GM12878 (cell line): ENCODE measurements at regions of chr1 and their contacts with region 1.

Region 1: DNA sequence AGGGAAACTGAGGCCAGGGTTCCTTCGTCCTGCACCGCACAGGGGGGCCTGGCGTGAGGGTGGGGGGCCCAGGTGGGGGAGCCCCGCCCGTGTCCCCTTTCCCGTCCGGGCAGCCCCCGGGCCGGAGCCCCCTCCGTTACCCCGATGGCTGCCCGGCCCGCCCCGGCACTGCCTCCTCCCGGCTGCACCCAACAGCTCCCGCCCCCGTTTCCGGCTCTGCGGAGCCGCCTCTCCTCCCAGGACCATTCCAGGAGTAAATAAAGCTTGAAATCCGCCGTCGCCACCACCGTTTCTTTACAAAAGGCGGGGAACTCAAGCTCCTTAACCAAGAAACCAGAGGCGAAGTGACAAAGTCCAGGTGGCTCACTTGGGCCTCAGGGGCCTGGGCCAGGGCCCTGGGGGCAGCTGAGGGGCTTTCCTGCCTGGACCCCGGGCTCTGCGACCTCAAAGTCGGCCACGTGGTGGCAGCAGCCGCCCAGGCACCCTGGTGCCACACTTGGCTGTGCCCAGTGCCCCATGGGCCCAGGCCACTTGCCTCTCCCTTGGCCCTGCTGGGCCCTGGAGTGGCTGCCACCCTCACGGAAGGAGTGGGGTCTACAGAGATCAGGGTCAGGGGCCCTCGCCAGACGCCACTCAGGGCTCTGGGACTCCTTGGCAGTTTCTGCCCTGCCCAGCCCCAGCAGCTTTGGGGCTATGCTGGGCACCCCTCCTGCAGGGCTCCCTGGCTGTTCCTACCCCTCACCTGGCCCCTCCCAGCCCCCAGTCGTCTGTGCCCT is 514 bp upstream of the FAAP20 start:
- DNase-seq: peak; percentile 43
- ATAC-seq: peak; percentile 91
- H3K4me3 ChIP-seq: peak overlapping the region; percentile 61
- H3K27ac ChIP-seq: peak overlapping the region; percentile 89
- H3K4me1 ChIP-seq: peaks cover 10% of the 10 kb centered on the region
- H3K27me3 ChIP-seq: no peaks in the 10 kb centered on the region
- CTCF ChIP-seq: peak; percentile 90 to 92 (median 91); a peak in 5 of 6 replicates
- EP300 ChIP-seq: no peak
- POLR2A ChIP-seq: peak; percentile 54
- RAD21 ChIP-seq: peak; percentile 89

Region 2: GRCh38 chr1:2205191-2205952 is 10.3 kb after region 1 on chr1:
- CTCF ChIA-PET with region 1: interaction called, 3 read pairs
- POLR2A ChIA-PET with region 1: interaction called, 9 read pairs
- RAD21 ChIA-PET with region 1: interaction called, 14 read pairs
- SMC1A ChIA-PET with region 1: no interaction called
- in situ Hi-C with region 1: no loop called
- intact Hi-C with region 1: no loop called
- DNase-seq: peak; percentile 33
- ATAC-seq: peak; percentile 90
- H3K4me3 ChIP-seq: peak overlapping the region; percentile 64; the same call in 1 of the 2 replicates
- H3K27ac ChIP-seq: no peak overlapping the region
- H3K4me1 ChIP-seq: peaks cover 4% of the 10 kb centered on the region
- H3K27me3 ChIP-seq: no peaks in the 10 kb centered on the region; a peak in 1 of 4 replicates
- CTCF ChIP-seq: no peak
- EP300 ChIP-seq: no peak
- POLR2A ChIP-seq: peak; percentile 51
- RAD21 ChIP-seq: no peak

Region 3: DNA sequence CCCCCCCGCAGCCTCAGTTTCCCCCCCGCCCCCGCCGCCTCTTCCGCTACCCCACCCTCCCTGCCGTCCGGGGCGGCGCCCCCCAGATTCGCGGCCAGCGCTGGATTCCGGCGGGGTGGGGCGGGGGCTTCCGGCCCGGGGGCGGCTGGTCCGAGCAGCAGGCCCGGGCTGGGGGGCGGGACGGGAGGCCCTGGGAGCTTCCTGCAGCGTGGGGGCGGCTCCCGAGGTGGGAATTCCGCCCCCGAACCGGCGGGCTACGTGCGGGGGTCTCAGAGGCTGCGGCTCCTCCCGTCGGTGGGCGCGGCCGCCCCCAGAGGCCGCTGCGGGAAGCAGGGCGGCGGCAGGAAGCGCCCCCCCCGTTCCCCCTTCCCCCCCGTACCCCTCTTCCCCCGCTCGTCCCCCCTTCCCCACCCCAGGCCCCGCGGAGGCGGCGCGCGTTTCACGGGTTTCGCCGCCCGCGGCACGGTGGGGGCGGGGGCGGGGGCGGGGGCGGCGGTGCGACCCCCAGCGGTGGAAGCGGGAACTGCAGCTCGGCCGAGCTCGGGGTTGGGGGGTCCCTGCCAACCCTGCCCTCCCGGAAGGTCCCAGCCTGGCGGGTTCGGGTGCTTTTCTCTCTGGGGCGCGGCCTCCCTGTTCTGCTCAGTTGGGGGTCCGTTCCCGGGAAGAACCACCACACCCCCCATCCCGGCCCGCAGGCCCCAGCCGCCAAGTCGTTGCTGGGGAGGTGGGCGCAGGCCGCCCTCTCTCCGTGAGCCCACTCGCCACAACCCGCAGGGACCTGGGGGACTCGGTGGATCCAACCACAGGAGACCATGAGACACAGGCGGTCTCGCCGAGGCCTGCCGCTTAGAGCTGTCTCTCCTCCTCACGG is 120.0 kb after region 1 on chr1:
- CTCF ChIA-PET with region 1: interaction called, 12 read pairs
- POLR2A ChIA-PET with region 1: no interaction called
- RAD21 ChIA-PET with region 1: interaction called, 18 read pairs
- SMC1A ChIA-PET with region 1: interaction called, 3 read pairs
- in situ Hi-C with region 1: no loop called
- intact Hi-C with region 1: loop called (anchors 5 kb)
- DNase-seq: no peak
- ATAC-seq: peak; percentile 68
- H3K4me3 ChIP-seq: peak overlapping the region; percentile 41; the same call in 1 of the 2 replicates
- H3K27ac ChIP-seq: no peak overlapping the region
- H3K4me1 ChIP-seq: peaks cover 10% of the 10 kb centered on the region
- H3K27me3 ChIP-seq: no peaks in the 10 kb centered on the region
- CTCF ChIP-seq: peak; percentile 54 to 71 (median 56)
- EP300 ChIP-seq: no peak
- POLR2A ChIP-seq: no peak
- RAD21 ChIP-seq: 0 out of 2 replicates have a peak, but pooled peaks have one; percentile 6

Region 4: DNA sequence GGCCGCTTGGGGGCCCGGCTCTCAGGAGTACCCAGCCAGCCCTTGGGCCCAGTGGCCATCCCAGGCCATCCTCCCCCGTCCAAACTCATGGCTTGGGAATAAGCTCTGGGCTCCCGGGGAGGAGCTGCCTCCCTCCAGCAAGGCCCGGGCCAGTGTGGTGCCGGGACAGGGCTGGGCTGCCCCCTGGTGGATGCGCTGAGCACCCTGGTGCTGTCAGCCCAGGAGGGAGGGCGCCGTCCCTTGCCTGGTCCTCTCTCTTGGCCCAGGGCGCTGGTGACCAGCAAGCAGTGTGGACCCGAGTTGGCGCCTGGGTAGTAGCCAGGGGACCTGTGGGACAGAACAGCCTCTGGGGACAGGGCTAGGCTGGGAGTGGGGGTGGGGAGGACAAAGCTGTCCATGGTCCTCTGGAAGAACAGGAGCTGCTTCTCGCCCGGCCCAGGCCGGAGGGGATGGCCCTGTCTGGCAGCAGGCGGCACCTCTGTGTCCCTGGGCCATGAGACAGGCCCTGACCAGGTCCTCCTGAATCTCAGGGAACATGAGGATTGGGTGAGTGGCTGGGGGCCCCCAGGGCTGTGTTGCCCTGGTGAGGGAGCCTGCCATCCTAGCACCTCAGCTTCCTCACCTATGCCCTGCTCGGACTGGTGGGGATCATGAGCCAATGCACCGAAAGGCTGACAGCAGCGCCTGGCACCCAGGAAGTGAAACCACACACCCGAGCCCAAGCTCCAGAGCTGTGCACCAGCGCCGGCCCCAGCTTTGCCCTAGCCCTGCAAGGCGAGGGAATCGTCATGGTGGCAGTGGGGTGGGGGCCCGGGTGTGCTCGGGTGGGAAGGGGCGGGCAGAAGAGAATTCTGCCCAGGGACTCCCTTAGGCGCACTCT is 186.9 kb after region 1 on chr1:
- CTCF ChIA-PET with region 1: interaction called, 98 read pairs
- POLR2A ChIA-PET with region 1: interaction called, 12 read pairs
- RAD21 ChIA-PET with region 1: interaction called, 78 read pairs
- SMC1A ChIA-PET with region 1: interaction called, 62 read pairs
- in situ Hi-C with region 1: loop called (anchors 5 kb)
- intact Hi-C with region 1: loop called (anchors 1 kb)
- DNase-seq: no peak
- ATAC-seq: peak; percentile 98
- H3K4me3 ChIP-seq: no peak overlapping the region
- H3K27ac ChIP-seq: no peak overlapping the region
- H3K4me1 ChIP-seq: peaks cover 11% of the 10 kb centered on the region
- H3K27me3 ChIP-seq: no peaks in the 10 kb centered on the region
- CTCF ChIP-seq: peak; percentile 87 to 95 (median 95)
- EP300 ChIP-seq: no peak
- POLR2A ChIP-seq: no peak
- RAD21 ChIP-seq: peak; percentile 84

Region 5: GRCh38 chr1:2391041-2391930 is 196.2 kb after region 1 on chr1 and contains the starts of genes MORN1 and RER1:
- CTCF ChIA-PET with region 1: interaction called, 22 read pairs
- POLR2A ChIA-PET with region 1: interaction called, 5 read pairs
- RAD21 ChIA-PET with region 1: interaction called, 16 read pairs
- SMC1A ChIA-PET with region 1: interaction called, 11 read pairs
- in situ Hi-C with region 1: loop called (anchors 5 kb)
- intact Hi-C with region 1: no loop called
- DNase-seq: peak; percentile 93
- ATAC-seq: peak; percentile 97
- H3K4me3 ChIP-seq: peak within 1 kb of the TSS; percentile 98
- H3K27ac ChIP-seq: peak within 1 kb of the TSS; percentile 71
- H3K4me1 ChIP-seq: peaks cover 42% of the 10 kb centered on the region
- H3K27me3 ChIP-seq: no peaks in the 10 kb centered on the region
- CTCF ChIP-seq: no peak
- EP300 ChIP-seq: no peak
- POLR2A ChIP-seq: peak; percentile 96
- RAD21 ChIP-seq: no peak
- polyA plus RNA-seq, gene MORN1: 0.76 to 1.8 TPM
- polyA plus RNA-seq, gene RER1: 29.2 to 48.5 TPM

Region 6: GRCh38 chr1:2412519-2413233 is 217.6 kb after region 1 on chr1 and contains the start of gene PEX10:
- CTCF ChIA-PET with region 1: interaction called, 7 read pairs
- POLR2A ChIA-PET with region 1: interaction called, 3 read pairs
- RAD21 ChIA-PET with region 1: interaction called, 13 read pairs
- SMC1A ChIA-PET with region 1: interaction called, 9 read pairs
- in situ Hi-C with region 1: no loop called
- intact Hi-C with region 1: no loop called
- DNase-seq: peak; percentile 80
- ATAC-seq: peak; percentile 88
- H3K4me3 ChIP-seq: peak within 1 kb of the TSS; percentile 98
- H3K27ac ChIP-seq: peak within 1 kb of the TSS; percentile 62
- H3K4me1 ChIP-seq: peaks cover 27% of the 10 kb centered on the region
- H3K27me3 ChIP-seq: no peaks in the 10 kb centered on the region
- CTCF ChIP-seq: no peak
- EP300 ChIP-seq: no peak
- POLR2A ChIP-seq: peak; percentile 87
- RAD21 ChIP-seq: no peak
- polyA plus RNA-seq, gene PEX10: 0.24 TPM in 1 of 2 experiments, not detected in the other

Region 7: GRCh38 chr1:2425892-2426291 is 230.8 kb after region 1 on chr1:
- CTCF ChIA-PET with region 1: no interaction called
- POLR2A ChIA-PET with region 1: no interaction called
- RAD21 ChIA-PET with region 1: no interaction called
- SMC1A ChIA-PET with region 1: no interaction called
- in situ Hi-C with region 1: no loop called
- intact Hi-C with region 1: no loop called
- DNase-seq: no peak
- ATAC-seq: no peak
- H3K4me3 ChIP-seq: no peak overlapping the region
- H3K27ac ChIP-seq: no peak overlapping the region
- H3K4me1 ChIP-seq: no peaks in the 10 kb centered on the region
- H3K27me3 ChIP-seq: no peaks in the 10 kb centered on the region
- CTCF ChIP-seq: no peak
- EP300 ChIP-seq: no peak
- POLR2A ChIP-seq: no peak
- RAD21 ChIP-seq: no peak

Region 8: DNA sequence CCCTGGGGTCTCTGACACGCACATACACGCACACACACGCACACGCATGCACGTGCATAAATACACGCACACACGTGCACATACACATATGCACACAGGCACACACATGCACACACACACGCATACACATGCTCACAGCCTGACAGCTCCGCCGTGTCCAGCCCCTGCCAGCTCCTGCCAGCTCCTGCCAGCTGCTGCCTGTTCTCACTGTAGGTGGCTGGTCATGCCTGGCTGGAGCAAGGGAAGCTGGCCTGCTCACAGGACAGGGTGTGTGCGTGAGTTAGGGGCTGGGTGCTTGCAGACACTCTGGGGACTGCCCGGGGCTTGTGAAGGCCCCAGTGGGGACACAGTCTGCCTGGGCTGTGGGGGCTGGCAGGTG is 285.9 kb after region 1 on chr1:
- CTCF ChIA-PET with region 1: no interaction called
- POLR2A ChIA-PET with region 1: no interaction called
- RAD21 ChIA-PET with region 1: no interaction called
- SMC1A ChIA-PET with region 1: no interaction called
- in situ Hi-C with region 1: no loop called
- intact Hi-C with region 1: no loop called
- DNase-seq: no peak
- ATAC-seq: no peak; the same call in 2 of the 3 replicates
- H3K4me3 ChIP-seq: no peak overlapping the region
- H3K27ac ChIP-seq: no peak overlapping the region
- H3K4me1 ChIP-seq: no peaks in the 10 kb centered on the region
- H3K27me3 ChIP-seq: no peaks in the 10 kb centered on the region
- CTCF ChIP-seq: no peak
- EP300 ChIP-seq: no peak
- POLR2A ChIP-seq: no peak
- RAD21 ChIP-seq: no peak

Region 9: DNA sequence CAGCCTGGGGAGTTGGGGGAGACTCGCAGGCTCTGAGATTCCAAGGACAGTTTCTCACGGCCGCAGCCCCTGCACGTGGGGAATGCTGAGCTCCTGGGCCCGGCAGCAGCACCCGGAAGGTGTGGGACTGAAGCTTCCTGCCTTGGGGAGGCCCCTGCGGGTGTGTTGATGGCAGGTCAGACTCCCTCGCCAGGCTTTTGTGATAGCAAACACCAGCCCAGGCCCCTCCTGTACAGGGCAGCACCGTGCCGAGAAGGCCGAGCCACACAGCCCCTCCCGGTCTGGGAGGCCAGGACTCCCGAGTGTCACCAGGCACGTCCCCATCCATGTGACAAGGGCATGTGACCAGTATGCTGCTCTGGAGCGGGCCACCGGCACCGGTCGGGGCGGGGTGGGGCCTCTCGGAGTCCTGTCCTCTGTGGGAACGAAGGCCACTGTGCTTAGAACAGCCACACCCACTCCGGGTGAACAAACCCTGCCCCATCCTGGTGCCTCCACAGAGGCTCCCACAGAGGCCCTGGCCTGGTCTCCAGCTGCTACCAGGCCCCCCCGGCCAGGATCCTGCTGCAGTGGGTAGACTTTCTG is 1228.3 kb after region 1 on chr1:
- CTCF ChIA-PET with region 1: no interaction called
- POLR2A ChIA-PET with region 1: no interaction called
- RAD21 ChIA-PET with region 1: no interaction called
- SMC1A ChIA-PET with region 1: no interaction called
- in situ Hi-C with region 1: loop called (anchors 10 kb)
- intact Hi-C with region 1: loop called (anchors 5 kb)
- DNase-seq: no peak
- ATAC-seq: no peak
- H3K4me3 ChIP-seq: no peak overlapping the region
- H3K27ac ChIP-seq: no peak overlapping the region
- H3K4me1 ChIP-seq: no peaks in the 10 kb centered on the region
- H3K27me3 ChIP-seq: no peaks in the 10 kb centered on the region; a peak in 2 of 4 replicates
- CTCF ChIP-seq: no peak
- EP300 ChIP-seq: no peak
- POLR2A ChIP-seq: no peak
- RAD21 ChIP-seq: no peak